ENCODE measurements at regions of chr17 and their contacts with region 1.

Region 1: DNA sequence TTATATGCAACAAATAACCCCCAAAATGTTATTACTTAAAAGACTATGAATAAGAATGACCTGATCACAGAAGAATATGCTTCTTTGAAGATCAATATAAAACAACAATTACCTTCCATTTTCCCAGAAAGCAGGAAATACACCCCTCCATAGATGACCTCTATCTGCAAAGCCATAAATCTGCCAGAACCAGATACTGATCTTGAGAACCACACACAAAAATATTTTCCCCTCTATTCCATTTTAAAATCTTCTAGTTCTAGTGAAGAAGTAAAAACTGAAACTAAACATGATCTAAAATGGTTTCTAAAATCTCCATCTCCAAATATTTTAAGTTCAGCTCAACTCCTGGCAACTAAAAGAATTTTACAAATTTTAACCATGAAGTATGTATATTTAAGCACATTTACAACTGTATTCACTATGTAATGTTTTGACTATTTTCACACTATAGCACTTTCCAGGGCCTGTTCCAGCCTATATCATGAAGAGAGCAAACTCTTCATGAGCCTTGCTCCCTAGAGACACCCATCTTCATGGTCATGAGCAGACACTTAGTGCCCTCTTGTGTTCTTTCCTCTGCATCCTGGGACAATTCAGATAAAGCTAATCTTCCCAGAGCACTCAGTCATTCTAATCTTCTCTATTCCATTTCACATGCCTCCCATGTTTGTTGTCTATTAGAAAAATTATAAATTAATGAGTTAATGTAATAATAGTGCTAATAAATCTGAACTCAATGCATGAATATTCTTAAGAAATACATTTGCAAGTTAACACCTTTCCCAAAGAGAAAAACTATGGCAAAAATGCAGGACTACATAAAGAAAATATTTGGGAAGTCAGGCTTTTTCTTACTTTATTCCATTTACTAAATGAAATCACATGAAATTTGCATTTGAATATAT is 87.0 kb downstream of the HELZ start:
- DNase-seq: peak; percentile 28 to 71
- ATAC-seq: peak; percentile 95 to 97
- H3K4me3 ChIP-seq: no peak overlapping the region
- H3K27ac ChIP-seq: no peak overlapping the region
- H3K4me1 ChIP-seq: peaks cover 4% of the 10 kb centered on the region; the same call in 1 of the 3 replicates
- CTCF ChIP-seq: peak; percentile 84
- EP300 ChIP-seq: no peak
- POLR2A ChIP-seq: no peak
- RAD21 ChIP-seq: peak; percentile 85 to 89

Region 2: GRCh38 chr17:66906321-66907278 is 251.4 kb before region 1 on chr17:
- CTCF ChIA-PET with region 1: interaction called, 12 read pairs
- POLR2A ChIA-PET with region 1: no interaction called
- DNase-seq: peak; percentile 71 to 88
- ATAC-seq: peak in 1 of 2 experiments; percentile 28; a peak in 3 of 6 replicates
- H3K4me3 ChIP-seq: no peak overlapping the region
- H3K27ac ChIP-seq: peak overlapping the region; percentile 77 to 81
- H3K4me1 ChIP-seq: peaks cover 31% of the 10 kb centered on the region
- CTCF ChIP-seq: peak; percentile 96
- EP300 ChIP-seq: no peak
- POLR2A ChIP-seq: no peak
- RAD21 ChIP-seq: peak; percentile 90 to 96

Region 3: DNA sequence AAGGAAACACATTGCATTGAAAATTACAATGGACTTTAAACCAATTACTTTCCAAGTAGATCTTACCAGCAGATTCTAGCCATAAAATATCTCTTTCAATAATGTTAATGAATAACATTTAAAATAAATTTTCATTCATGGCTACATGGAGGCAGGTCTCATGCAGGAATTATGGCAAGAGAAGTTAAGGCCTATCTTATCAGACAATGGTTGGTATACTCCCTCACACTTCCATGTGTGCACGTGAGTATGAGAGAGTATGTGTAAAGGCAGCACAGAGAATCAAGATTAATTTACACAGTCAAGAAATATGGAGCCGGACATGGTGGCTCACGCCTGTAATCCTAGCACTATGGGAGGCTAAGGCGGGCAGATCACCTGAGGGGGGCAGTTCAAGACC is 10.5 kb after region 1 on chr17:
- CTCF ChIA-PET with region 1: interaction called, 17 read pairs
- POLR2A ChIA-PET with region 1: no interaction called
- DNase-seq: no peak
- ATAC-seq: no peak
- H3K4me3 ChIP-seq: no peak overlapping the region
- H3K27ac ChIP-seq: no peak overlapping the region
- H3K4me1 ChIP-seq: no peaks in the 10 kb centered on the region
- CTCF ChIP-seq: no peak
- EP300 ChIP-seq: no peak
- POLR2A ChIP-seq: no peak
- RAD21 ChIP-seq: no peak

Region 4: GRCh38 chr17:67187927-67188326 is 29.9 kb after region 1 on chr17:
- CTCF ChIA-PET with region 1: no interaction called
- POLR2A ChIA-PET with region 1: no interaction called
- DNase-seq: no peak
- ATAC-seq: no peak
- H3K4me3 ChIP-seq: no peak overlapping the region
- H3K27ac ChIP-seq: no peak overlapping the region
- H3K4me1 ChIP-seq: no peaks in the 10 kb centered on the region
- CTCF ChIP-seq: no peak
- EP300 ChIP-seq: no peak
- POLR2A ChIP-seq: no peak
- RAD21 ChIP-seq: no peak

Measured in A549 (cell line).